ENCODE measurements at regions of chr1 and their contacts with region 1.

Region 1: GRCh38 chr1:156096640-156097391 is 14.6 kb upstream of the MEX3A start:
- DNase-seq: peak; percentile 84
- CTCF ChIP-seq: peak; percentile 86

Region 2: GRCh38 chr1:155706091-155706619 is 390.7 kb before region 1 on chr1:
- CTCF ChIA-PET with region 1: no interaction called
- POLR2A ChIA-PET with region 1: no interaction called
- DNase-seq: no peak
- CTCF ChIP-seq: no peak

Region 3: GRCh38 chr1:156076501-156077429 is 20.1 kb before region 1 on chr1:
- CTCF ChIA-PET with region 1: interaction called, 18 read pairs
- POLR2A ChIA-PET with region 1: no interaction called
- DNase-seq: peak; percentile 83
- CTCF ChIP-seq: no peak

Region 4: DNA sequence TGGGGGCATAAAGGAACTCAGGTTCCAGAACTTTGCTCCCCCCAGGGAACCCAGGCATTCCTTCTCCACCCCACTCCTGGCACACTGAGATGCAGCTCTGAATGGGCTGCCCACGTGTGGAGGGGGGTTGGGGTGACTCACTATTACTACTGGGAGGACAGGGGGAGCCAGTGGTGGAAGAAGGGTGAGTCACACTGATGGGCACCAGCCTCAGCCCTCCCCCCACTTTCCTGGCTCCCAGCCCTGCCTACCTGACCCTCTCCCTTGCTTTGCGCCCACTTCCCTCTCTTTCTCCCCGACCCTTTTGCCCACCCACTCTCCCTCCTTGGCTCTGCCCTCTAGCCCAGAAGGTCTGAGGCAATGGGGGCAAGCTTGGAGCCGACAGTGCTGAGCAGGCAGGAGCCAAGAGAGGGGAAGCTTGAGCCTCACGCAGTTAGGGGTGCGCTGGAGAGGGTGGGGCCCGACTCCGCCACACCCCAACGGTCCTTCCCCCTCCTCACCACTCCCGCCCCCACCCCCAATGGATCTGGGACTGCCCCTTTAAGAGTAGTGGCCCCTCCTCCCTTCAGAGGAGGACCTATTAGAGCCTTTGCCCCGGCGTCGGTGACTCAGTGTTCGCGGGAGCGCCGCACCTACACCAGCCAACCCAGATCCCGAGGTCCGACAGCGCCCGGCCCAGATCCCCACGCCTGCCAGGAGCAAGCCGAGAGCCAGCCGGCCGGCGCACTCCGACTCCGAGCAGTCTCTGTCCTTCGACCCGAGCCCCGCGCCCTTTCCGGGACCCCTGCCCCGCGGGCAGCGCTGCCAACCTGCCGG is 17.5 kb after region 1 on chr1 and contains the start of gene LMNA:
- CTCF ChIA-PET with region 1: interaction called, 1,172 read pairs
- POLR2A ChIA-PET with region 1: interaction called, 266 read pairs
- DNase-seq: peak; percentile 83
- CTCF ChIP-seq: no peak

Region 5: DNA sequence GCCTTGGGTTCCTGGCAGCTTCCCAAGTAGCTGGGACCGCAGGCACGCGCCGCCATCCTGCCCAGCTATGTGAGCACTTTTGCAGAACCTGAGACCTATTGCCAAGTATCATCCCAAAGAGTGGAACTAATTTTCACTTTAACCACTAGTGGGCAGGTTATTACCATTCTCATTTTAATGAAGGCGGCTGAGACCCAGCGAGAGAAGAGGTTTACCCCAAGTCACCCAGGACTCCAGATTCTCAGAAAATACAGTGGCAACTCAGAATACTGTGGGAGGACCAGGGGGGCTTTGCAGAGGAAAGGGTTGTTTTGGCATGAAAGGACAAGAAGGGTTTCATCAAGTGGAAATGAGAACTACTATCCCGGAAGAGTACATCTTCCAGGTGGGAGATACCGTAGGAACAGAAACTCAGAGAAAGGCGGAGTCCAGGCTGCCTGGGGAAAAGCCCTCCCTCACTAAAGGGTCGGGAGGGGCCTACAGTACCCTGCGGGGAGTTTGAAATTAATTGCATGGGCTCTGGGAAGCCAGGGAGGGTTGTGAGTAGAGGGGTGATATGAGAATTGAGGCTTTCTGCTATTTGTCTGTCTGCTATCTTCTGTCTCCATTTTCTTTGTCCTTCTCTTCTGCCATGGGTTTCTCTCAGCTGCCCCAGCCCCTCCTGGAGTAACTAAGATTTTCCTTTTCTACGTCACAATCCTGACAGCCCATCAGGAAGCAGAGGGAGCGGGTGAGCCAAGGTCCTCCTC is 49.4 kb after region 1 on chr1:
- CTCF ChIA-PET with region 1: interaction called, 37 read pairs
- POLR2A ChIA-PET with region 1: interaction called, 5 read pairs
- DNase-seq: peak; percentile 81
- CTCF ChIP-seq: peak; percentile 69

Region 6: GRCh38 chr1:156439036-156439776 is 342.4 kb after region 1 on chr1:
- CTCF ChIA-PET with region 1: no interaction called
- POLR2A ChIA-PET with region 1: no interaction called
- DNase-seq: no peak
- CTCF ChIP-seq: no peak